BJ (cell line): ENCODE measurements at regions of chr5 and their contacts with region 1.

Region 1: GRCh38 chr5:96235008-96235910 is 197.8 kb downstream of the PCSK1 start:
- DNase-seq: peak; percentile 65
- H3K4me3 ChIP-seq: no peak overlapping the region
- H3K27me3 ChIP-seq: no peaks in the 10 kb centered on the region
- CTCF ChIP-seq: no peak

Region 2: DNA sequence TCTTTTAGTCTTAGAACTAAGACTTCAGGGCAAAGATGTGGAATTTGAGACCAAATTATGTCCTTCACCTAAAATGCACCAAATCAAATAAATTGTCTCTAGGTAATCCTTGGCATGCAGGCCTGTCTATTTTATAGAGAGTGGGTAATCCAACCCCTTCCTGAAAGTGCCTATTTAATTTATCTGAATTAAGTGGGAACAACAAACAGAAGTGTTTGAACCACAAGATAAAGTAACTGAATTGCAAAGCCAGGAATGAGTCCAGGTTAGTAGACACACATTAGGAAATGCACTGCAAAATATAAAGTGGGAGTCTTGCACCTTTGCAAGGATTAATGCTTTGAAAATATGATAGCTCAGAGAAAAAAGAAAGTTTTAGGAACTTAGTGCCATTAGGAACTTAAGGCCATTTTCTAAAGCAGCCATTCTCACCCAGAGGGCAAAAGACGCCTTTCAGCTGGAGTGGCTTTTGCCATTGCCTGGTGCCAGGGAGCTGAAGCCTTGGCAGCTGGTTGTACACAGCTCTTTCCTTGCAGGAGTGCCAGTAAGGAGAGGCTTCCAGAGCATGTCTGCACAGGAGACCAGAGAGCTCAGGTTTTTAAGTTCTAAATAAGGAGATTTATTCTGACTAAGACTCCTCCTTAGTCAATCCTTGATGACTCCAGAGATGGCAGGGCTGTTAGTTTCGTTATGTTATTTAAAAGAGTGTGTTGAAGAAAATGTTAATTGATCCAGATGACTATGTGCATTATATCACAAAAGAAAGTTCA is 121.9 kb before region 1 on chr5:
- CTCF ChIA-PET with region 1: no interaction called
- POLR2A ChIA-PET with region 1: interaction called, 12 read pairs
- DNase-seq: no peak
- H3K4me3 ChIP-seq: no peak overlapping the region
- H3K27me3 ChIP-seq: no peaks in the 10 kb centered on the region
- CTCF ChIP-seq: no peak

Region 3: GRCh38 chr5:96220610-96221390 is 14.5 kb before region 1 on chr5:
- CTCF ChIA-PET with region 1: no interaction called
- POLR2A ChIA-PET with region 1: no interaction called
- DNase-seq: no peak
- H3K4me3 ChIP-seq: no peak overlapping the region
- H3K27me3 ChIP-seq: no peaks in the 10 kb centered on the region
- CTCF ChIP-seq: no peak

Region 4: GRCh38 chr5:96250782-96251181 is 15.5 kb after region 1 on chr5:
- CTCF ChIA-PET with region 1: no interaction called
- POLR2A ChIA-PET with region 1: interaction called, 14 read pairs
- DNase-seq: no peak
- H3K4me3 ChIP-seq: no peak overlapping the region
- H3K27me3 ChIP-seq: no peaks in the 10 kb centered on the region
- CTCF ChIP-seq: no peak

Region 5: GRCh38 chr5:96300976-96301375 is 65.7 kb after region 1 on chr5:
- CTCF ChIA-PET with region 1: no interaction called
- POLR2A ChIA-PET with region 1: no interaction called
- DNase-seq: no peak
- H3K4me3 ChIP-seq: no peak overlapping the region
- H3K27me3 ChIP-seq: no peaks in the 10 kb centered on the region
- CTCF ChIP-seq: no peak